ENCODE measurements at regions of chr1 and their contacts with region 1.

Region 1: DNA sequence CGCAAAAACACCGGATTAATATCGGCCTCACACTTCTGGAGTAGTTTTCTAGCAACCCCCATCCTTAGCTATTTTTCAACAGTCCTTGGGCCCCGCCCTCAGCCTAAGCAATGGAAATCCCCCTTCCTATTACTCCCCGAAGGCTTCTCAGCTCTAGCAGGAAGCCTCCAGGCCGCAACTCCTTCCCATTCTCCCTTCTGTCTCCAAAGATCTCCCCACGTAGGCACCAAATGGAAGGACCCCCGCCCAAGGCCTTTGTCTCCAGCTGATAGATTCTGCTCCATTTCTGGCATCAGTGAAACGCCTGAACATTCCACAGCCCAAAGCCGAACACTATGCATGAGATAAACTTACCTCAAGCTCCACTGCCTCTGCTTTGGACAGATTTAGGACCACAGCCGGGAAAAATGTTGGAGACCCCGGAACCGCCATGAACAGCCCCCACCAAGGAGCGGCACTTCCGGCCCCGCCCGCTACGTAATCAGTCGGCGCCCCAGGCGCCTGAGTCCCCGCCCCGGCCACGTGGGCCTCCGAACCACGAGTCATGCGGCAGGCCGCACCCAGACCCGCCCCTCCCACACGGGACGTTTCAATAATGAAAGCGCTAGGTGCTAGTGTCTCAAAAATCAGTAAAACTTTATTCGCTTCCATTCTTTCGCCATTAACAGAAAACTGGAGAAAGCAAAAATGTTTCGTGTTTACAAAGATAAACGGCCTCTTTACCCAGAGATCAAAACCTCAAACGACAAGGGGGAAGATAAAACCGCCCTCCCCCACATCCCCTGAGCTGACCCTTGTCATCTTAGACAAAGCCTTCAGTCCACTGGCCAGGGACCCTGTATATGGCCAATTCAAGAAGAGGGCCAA is at the start of gene NRAS:
- DNase-seq: peak; percentile 97
- ATAC-seq: peak; percentile 93 to 99 (median 96)
- H3K4me3 ChIP-seq: peak within 1 kb of the TSS; percentile 89
- H3K4me3 Mint-ChIP-seq: peak within 1 kb of the TSS; percentile 97
- H3K27ac ChIP-seq: peak within 1 kb of the TSS; percentile 96
- H3K27ac Mint-ChIP-seq: peak within 1 kb of the TSS; percentile 98 to 99
- H3K4me1 ChIP-seq: peaks cover 13% of the 10 kb centered on the region
- H3K4me1 Mint-ChIP-seq: peaks cover 25% of the 10 kb centered on the region in 2 donors
- H3K27me3 ChIP-seq: no peaks in the 10 kb centered on the region
- H3K27me3 Mint-ChIP-seq: no peaks in the 10 kb centered on the region
- CTCF ChIP-seq: no peak
- total RNA-seq, gene NRAS: 41.1 to 45.7 (median 43.8) TPM

Region 2: GRCh38 chr1:114524935-114525334 is 191.6 kb before region 1 on chr1:
- intact Hi-C with region 1: no loop called
- DNase-seq: no peak
- ATAC-seq: no peak
- H3K4me3 ChIP-seq: no peak overlapping the region
- H3K4me3 Mint-ChIP-seq: no peak overlapping the region
- H3K27ac ChIP-seq: no peak overlapping the region
- H3K27ac Mint-ChIP-seq: no peak overlapping the region
- H3K4me1 ChIP-seq: no peaks in the 10 kb centered on the region
- H3K4me1 Mint-ChIP-seq: no peaks in the 10 kb centered on the region
- H3K27me3 ChIP-seq: peaks cover under 1% of the 10 kb centered on the region
- H3K27me3 Mint-ChIP-seq: peaks cover 0 to 6% of the 10 kb centered on the region in 2 donors
- CTCF ChIP-seq: no peak

Region 3: DNA sequence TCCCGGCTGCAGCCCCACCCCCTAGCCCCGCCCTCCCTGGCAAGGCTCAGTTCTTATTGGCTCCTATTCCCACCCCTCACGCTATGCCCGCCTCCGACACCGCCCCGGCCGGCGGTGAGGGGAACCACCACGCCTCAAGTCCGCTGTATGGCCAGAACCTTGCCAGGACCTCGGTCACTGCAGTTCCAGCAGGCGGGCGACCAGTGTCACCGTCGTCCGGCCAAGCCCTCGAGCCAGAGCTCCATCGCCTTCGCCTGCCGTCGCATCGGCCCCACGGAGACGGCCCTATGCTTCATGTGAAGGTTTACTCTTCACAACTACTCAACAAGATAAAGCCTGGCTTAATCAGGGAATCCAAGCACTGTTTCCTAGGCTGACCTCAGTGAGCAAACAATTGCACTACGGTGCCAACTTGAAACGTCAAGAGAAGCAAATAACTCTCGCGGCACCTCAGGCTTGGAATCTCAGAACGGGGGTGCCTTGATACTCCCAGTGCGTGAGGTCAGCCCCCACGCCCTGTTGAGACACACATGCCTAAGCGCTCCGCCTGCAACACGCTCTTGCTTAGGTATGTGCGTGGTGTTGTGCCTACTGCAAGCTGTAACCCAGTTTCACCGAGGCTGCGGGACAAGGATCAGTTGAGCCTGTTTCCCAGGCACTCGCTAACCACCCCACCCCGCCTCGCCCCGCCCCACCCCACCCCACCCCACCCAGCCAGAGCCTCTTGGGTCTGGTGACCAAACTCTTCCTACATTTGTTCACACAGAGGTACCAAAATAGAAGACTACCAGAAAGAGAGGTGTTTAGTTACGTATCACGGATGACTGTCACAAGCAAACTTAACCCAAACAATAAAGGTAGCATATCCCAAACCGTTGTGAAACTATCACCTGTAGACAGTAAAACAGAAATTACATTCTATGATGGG is 46.2 kb before region 1 on chr1:
- intact Hi-C with region 1: loop called (anchors 1 kb)
- DNase-seq: peak; percentile 75 to 89
- ATAC-seq: peak; percentile 96 to 99 (median 98)
- H3K4me3 ChIP-seq: peak overlapping the region; percentile 85
- H3K4me3 Mint-ChIP-seq: peak overlapping the region; percentile 91
- H3K27ac ChIP-seq: no peak overlapping the region
- H3K27ac Mint-ChIP-seq: peak overlapping the region in 1 of 2 donors; percentile 79
- H3K4me1 ChIP-seq: peaks cover 13% of the 10 kb centered on the region
- H3K4me1 Mint-ChIP-seq: peaks cover 6 to 9% of the 10 kb centered on the region in 2 donors
- H3K27me3 ChIP-seq: peaks cover 13% of the 10 kb centered on the region
- H3K27me3 Mint-ChIP-seq: peaks cover 33 to 35% of the 10 kb centered on the region in 2 donors
- CTCF ChIP-seq: no peak